Panc1 (cell line): ENCODE measurements at regions of chr13 and their contacts with region 1.

Region 1: DNA sequence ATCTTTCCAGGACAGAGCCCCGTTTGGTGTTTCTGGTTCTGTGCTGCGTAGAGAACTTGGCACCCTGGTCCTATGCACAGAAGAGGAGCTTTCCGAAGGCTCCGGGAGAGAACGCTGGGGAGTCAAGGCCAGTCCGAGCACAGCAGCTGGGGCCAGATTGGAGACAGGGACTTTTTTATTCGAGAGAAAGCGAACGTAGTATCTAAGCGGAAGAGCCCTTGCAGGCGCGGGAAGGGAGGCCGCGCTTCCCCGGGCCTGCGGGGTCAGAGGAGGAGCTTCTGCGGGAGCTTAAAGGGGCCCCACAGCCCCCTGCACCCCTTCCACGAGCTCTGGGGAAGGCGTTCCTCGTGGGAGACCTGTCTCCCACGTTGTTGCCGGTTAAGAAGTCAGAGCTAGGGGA is 48.6 kb upstream of the ARHGEF7 start:
- DNase-seq: no peak
- ATAC-seq: no peak
- H3K4me3 ChIP-seq: no peak overlapping the region
- H3K27ac ChIP-seq: no peak overlapping the region
- H3K4me1 ChIP-seq: no peaks in the 10 kb centered on the region
- H3K27me3 ChIP-seq: no peaks in the 10 kb centered on the region
- CTCF ChIP-seq: no peak

Region 2: GRCh38 chr13:111153279-111153976 is 86.9 kb after region 1 on chr13:
- CTCF ChIA-PET with region 1: no interaction called
- POLR2A ChIA-PET with region 1: interaction called, 16 read pairs
- in situ Hi-C with region 1: no loop called
- intact Hi-C with region 1: no loop called
- DNase-seq: no peak
- ATAC-seq: peak; percentile 98
- H3K4me3 ChIP-seq: peak overlapping the region; percentile 75 to 83
- H3K27ac ChIP-seq: peak overlapping the region; percentile 89
- H3K4me1 ChIP-seq: peaks cover 6% of the 10 kb centered on the region
- H3K27me3 ChIP-seq: no peaks in the 10 kb centered on the region; the same call in 1 of the 2 replicates
- CTCF ChIP-seq: peak; percentile 36

Region 3: GRCh38 chr13:111210544-111211469 is 144.3 kb after region 1 on chr13:
- CTCF ChIA-PET with region 1: interaction called, 5 read pairs
- POLR2A ChIA-PET with region 1: no interaction called
- in situ Hi-C with region 1: no loop called
- intact Hi-C with region 1: loop called (anchors 5 kb)
- DNase-seq: no peak
- ATAC-seq: peak; percentile 90
- H3K4me3 ChIP-seq: no peak overlapping the region
- H3K27ac ChIP-seq: peak overlapping the region; percentile 66
- H3K4me1 ChIP-seq: peaks cover 26% of the 10 kb centered on the region
- H3K27me3 ChIP-seq: no peaks in the 10 kb centered on the region
- CTCF ChIP-seq: no peak